Ovary (tissue), 10 donors: ENCODE measurements at regions of chr2 and their contacts with region 1.

Region 1: DNA sequence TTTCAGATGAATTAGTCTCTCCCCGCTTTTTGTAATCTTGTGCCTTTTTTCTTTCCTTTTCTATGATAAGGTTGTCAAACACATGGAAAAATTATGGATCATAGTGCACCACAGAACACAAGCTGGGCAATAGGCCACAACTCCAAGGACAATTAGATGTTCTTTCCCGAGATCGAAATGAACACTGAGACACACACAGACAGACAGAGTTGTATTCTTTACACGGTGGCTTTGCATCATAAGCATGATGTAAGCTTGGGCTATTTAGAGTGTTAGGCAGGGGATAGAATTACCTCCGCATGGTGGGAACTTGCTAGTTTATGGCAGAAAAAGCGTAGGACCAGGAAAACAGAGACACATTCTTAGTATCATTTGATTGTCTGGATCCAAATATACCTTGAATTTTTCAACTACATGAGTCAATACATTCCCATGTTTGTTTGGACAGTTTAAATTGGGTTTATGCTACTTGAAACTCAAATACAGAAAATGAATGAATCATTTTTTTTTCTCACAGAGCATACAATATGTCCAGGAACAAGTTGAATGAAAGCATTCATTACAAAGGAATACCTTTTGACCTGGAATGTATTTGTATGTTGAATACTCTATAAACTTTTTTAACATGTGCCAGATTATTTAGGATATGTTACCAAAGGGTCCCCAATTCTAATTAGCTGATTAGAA is 1611.5 kb upstream of the TMEFF2 start:
- DNase-seq: no peak
- H3K4me3 ChIP-seq: no peak overlapping the region
- H3K27ac ChIP-seq: no peak overlapping the region
- H3K4me1 ChIP-seq: no peaks in the 10 kb centered on the region
- H3K27me3 ChIP-seq: no peaks in the 10 kb centered on the region
- CTCF ChIP-seq: no peak
- EP300 ChIP-seq: no peak
- POLR2A ChIP-seq: no peak

Region 2: GRCh38 chr2:193153576-193153975 is 652.7 kb before region 1 on chr2:
- intact Hi-C with region 1: loop called in 1 of 4 experiments (anchors 5 kb)
- DNase-seq: no peak
- H3K4me3 ChIP-seq: no peak overlapping the region
- H3K27ac ChIP-seq: no peak overlapping the region
- H3K4me1 ChIP-seq: no peaks in the 10 kb centered on the region
- H3K27me3 ChIP-seq: no peaks in the 10 kb centered on the region
- CTCF ChIP-seq: no peak
- EP300 ChIP-seq: no peak
- POLR2A ChIP-seq: no peak

Region 3: DNA sequence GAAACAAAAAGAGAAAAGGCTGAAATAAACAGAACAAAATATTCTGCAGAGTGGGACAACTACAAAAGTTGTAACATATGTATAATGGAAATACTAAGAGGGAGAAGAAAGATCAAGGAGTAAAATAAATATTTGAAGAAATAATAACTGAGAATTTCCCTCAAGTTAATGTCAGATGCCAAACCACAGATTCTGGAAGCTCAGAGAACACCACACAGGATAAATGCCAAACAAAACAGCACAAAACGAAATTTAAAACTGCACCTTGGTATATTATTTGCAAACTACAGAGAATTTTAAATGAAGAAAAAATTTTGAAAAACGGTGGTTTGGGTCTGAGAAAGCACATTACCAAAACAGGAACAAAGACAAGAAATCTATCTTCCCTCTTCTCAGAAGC is 22.6 kb before region 1 on chr2:
- intact Hi-C with region 1: no loop called
- DNase-seq: no peak
- H3K4me3 ChIP-seq: no peak overlapping the region
- H3K27ac ChIP-seq: no peak overlapping the region
- H3K4me1 ChIP-seq: no peaks in the 10 kb centered on the region
- H3K27me3 ChIP-seq: no peaks in the 10 kb centered on the region
- CTCF ChIP-seq: no peak
- EP300 ChIP-seq: no peak
- POLR2A ChIP-seq: no peak